ENCODE measurements at regions of chr9 and their contacts with region 1.

Region 1: GRCh38 chr9:69295872-69296552 is 29.0 kb upstream of the ENTREP1 start:
- DNase-seq: peak; percentile 16 to 56
- ATAC-seq: peak; percentile 92 to 99 (median 96)
- H3K4me3 ChIP-seq: peak overlapping the region; percentile 5
- H3K27ac ChIP-seq: peak overlapping the region; percentile 55
- H3K4me1 ChIP-seq: no peaks in the 10 kb centered on the region
- H3K27me3 ChIP-seq: no peaks in the 10 kb centered on the region
- CTCF ChIP-seq: no peak

Region 2: DNA sequence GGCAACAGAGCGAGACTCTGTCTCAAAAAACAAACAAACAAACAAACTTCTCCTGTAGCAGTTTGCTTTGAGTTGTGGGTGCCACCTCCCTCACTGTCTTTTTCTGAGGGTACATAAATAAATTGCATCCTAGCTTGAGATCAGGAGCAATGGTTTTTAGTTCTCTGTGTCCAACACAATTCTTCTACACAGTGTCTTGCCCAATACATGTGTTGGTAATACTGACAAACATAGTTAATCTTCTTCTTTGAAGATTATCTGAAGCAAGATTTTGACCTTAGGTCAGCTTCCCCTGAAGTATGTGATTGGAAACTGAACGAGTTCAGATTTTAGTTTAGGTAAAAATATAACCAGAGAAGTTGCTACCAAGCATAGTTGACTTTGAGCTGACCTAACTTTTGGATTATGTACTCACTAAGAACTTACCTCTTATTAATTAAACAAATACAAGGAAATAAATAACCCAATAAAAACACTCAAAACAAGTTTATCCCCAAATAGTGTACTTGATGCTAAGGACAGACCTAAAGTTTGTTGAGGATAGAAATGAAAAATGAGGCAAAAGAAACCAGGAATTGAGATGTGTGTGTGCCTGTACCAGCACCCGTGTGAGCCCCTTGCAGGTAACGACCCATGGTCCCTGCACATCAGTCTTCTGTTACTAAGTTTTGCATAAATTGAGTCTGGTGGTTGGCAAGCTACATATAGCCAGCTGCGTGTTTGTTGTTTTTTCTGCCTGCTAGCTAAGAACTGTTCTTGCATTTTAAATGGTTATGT is 105.7 kb before region 1 on chr9:
- intact Hi-C with region 1: no loop called
- DNase-seq: no peak
- ATAC-seq: no peak
- H3K4me3 ChIP-seq: no peak overlapping the region
- H3K27ac ChIP-seq: no peak overlapping the region
- H3K4me1 ChIP-seq: peaks cover 38% of the 10 kb centered on the region
- H3K27me3 ChIP-seq: no peaks in the 10 kb centered on the region
- CTCF ChIP-seq: no peak

Region 3: GRCh38 chr9:69273161-69273560 is 22.9 kb before region 1 on chr9:
- intact Hi-C with region 1: loop called (anchors 1 to 2 kb)
- DNase-seq: no peak
- ATAC-seq: peak; percentile 97 to 99 (median 99)
- H3K4me3 ChIP-seq: peak overlapping the region; percentile 40
- H3K27ac ChIP-seq: peak overlapping the region; percentile 81
- H3K4me1 ChIP-seq: peaks cover 14% of the 10 kb centered on the region
- H3K27me3 ChIP-seq: no peaks in the 10 kb centered on the region
- CTCF ChIP-seq: no peak

Region 4: GRCh38 chr9:69279084-69279729 is 16.8 kb before region 1 on chr9:
- intact Hi-C with region 1: loop called in 1 of 2 experiments (anchors 2 kb)
- DNase-seq: no peak
- ATAC-seq: no peak
- H3K4me3 ChIP-seq: no peak overlapping the region
- H3K27ac ChIP-seq: no peak overlapping the region
- H3K4me1 ChIP-seq: no peaks in the 10 kb centered on the region
- H3K27me3 ChIP-seq: no peaks in the 10 kb centered on the region
- CTCF ChIP-seq: no peak

Region 5: GRCh38 chr9:69376651-69377050 is 80.6 kb after region 1 on chr9:
- intact Hi-C with region 1: no loop called
- DNase-seq: peak in 1 of 2 donors; percentile 68
- ATAC-seq: peak; percentile 5 to 54 (median 48)
- H3K4me3 ChIP-seq: peak overlapping the region; percentile 2
- H3K27ac ChIP-seq: peak overlapping the region; percentile 96
- H3K4me1 ChIP-seq: peaks cover 56% of the 10 kb centered on the region
- H3K27me3 ChIP-seq: no peaks in the 10 kb centered on the region
- CTCF ChIP-seq: no peak

Region 6: GRCh38 chr9:69605406-69605805 is 309.4 kb after region 1 on chr9:
- intact Hi-C with region 1: no loop called
- DNase-seq: no peak
- ATAC-seq: peak in 3 of 4 donors; percentile 95 to 98 (median 96)
- H3K4me3 ChIP-seq: no peak overlapping the region
- H3K27ac ChIP-seq: peak overlapping the region; percentile 46
- H3K4me1 ChIP-seq: peaks cover 9% of the 10 kb centered on the region
- H3K27me3 ChIP-seq: no peaks in the 10 kb centered on the region
- CTCF ChIP-seq: no peak

Measured in psoas muscle (tissue), 8 donors.